HEK293T (cell line): ENCODE measurements at regions of chr5 and their contacts with region 1.

Region 1: GRCh38 chr5:174317259-174317894 is 271.9 kb downstream of the NSG2 start:
- DNase-seq: peak; percentile 87

Region 2: DNA sequence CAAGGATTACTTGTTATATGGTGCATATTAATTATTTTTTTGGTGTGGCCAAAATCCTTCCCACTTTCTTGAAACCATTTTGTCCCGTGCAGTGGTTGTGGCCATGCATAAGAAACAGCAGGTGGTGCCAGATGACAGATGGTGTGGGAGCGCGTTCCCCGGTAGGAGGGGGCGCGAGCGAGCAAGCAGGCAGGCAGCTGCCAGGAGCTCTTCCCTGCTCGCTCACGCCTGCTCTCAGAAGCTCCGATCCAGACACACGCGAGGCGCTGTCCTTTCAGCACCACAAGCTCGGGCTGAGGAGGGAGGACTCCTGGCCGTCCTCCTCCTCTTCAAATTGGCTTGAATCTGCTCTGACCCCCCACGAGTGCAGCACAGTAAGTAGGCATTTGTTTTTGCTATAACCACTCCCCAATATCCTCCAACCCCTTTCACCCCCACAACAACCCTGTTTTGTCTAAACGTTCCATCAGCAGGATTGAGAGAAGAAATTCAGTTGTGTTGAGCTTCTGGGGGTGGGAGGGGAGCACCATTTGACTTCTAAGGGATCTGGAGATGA is 271.8 kb before region 1 on chr5 and contains the start of gene NSG2:
- CTCF ChIA-PET with region 1: interaction called, 52 read pairs
- POLR2A ChIA-PET with region 1: interaction called, 3 read pairs
- DNase-seq: peak; percentile 97

Region 3: DNA sequence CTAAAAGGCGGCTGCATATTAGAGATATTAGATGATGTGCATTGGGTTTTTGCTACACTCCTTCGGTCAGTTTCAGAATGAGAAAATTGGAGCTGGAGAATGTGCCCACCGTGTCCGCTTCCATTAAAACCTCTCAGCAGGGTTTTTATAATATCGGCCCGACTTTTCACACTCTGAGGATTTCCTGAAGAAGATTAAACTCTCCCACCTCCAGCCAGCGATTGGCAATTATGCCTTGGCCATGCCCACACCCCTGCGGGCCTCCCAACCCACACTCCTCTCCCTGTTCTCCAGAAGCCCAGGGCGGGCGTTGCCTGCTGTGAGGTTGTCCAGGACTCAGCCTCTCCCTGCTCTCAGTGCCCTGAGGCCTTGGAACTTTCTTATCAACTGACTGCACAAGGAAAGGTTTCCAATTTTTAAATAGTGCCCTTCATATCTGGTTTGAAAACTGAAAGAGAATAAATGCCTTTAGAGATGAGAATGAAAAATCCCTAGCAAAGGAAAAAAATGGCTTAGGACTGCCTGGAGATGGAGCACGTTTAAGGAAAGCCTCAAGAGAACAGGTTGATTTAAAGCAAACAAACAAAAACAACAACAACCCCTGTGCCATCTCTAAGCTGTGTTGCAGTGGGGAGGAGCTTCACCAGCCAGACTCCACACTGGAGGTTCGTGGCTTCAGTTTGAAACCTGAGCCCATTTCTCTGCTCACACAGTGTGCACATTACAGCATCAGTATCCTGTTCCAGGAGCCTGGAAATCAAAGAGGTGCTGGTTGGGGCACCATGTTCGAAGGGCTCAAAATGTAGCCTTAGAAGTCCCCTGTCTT is 21.0 kb after region 1 on chr5:
- CTCF ChIA-PET with region 1: no interaction called
- POLR2A ChIA-PET with region 1: no interaction called
- DNase-seq: peak; percentile 66

Region 4: GRCh38 chr5:174397206-174397605 is 79.8 kb after region 1 on chr5:
- CTCF ChIA-PET with region 1: interaction called, 11 read pairs
- POLR2A ChIA-PET with region 1: no interaction called
- DNase-seq: no peak

Region 5: GRCh38 chr5:174464504-174465165 is 147.3 kb after region 1 on chr5:
- CTCF ChIA-PET with region 1: no interaction called
- POLR2A ChIA-PET with region 1: no interaction called
- DNase-seq: no peak